ENCODE measurements at regions of chr1 and their contacts with region 1.

Region 1: GRCh38 chr1:203861379-203862184 is at the start of gene SNRPE:
- DNase-seq: peak; percentile 91 to 96
- H3K4me3 ChIP-seq: peak within 1 kb of the TSS; percentile 85
- H3K27ac ChIP-seq: peak within 1 kb of the TSS; percentile 66
- H3K4me1 ChIP-seq: peaks cover 21% of the 10 kb centered on the region
- H3K27me3 ChIP-seq: no peaks in the 10 kb centered on the region
- CTCF ChIP-seq: peak; percentile 95
- total RNA-seq, gene SNRPE: 201 and 218 TPM in 2 replicates

Region 2: DNA sequence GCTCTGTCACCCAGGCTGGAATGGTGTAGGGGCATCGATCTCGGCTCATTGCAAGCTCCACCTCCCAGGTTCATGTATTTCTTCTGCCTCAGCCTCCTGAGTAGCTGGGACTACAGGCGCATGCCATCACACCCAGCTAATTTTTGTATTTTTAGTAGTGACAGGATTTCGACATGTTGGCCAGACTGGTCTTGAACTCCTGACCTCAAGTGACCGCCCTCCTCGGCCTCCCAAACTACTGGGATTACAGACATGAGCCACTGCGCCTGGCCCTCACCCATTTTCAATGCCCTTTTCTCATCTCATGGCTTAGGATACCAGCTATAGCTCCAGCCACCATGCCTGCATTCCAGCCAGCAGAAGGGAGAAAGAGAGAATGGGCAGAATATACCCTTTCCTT is 198.4 kb after region 1 on chr1:
- CTCF ChIA-PET with region 1: no interaction called
- POLR2A ChIA-PET with region 1: interaction called, 12 read pairs
- intact Hi-C with region 1: no loop called
- DNase-seq: no peak
- H3K4me3 ChIP-seq: no peak overlapping the region
- H3K27ac ChIP-seq: no peak overlapping the region
- H3K4me1 ChIP-seq: peaks cover 54% of the 10 kb centered on the region
- H3K27me3 ChIP-seq: no peaks in the 10 kb centered on the region
- CTCF ChIP-seq: no peak

Region 3: GRCh38 chr1:204162231-204163074 is 300.9 kb after region 1 on chr1:
- CTCF ChIA-PET with region 1: interaction called, 7 read pairs
- POLR2A ChIA-PET with region 1: no interaction called
- intact Hi-C with region 1: loop called (anchors 1 kb)
- DNase-seq: peak; percentile 93 to 94
- H3K4me3 ChIP-seq: no peak overlapping the region
- H3K27ac ChIP-seq: 0 out of 2 replicates have a peak overlapping the region, but pooled peaks have one; percentile 28
- H3K4me1 ChIP-seq: peaks cover 21% of the 10 kb centered on the region
- H3K27me3 ChIP-seq: no peaks in the 10 kb centered on the region
- CTCF ChIP-seq: peak; percentile 99

Region 4: GRCh38 chr1:204213668-204214662 is 352.4 kb after region 1 on chr1 and contains the start of gene GOLT1A:
- CTCF ChIA-PET with region 1: interaction called, 4 read pairs
- POLR2A ChIA-PET with region 1: no interaction called
- intact Hi-C with region 1: loop called (anchors 5 kb)
- DNase-seq: peak; percentile 91 to 93
- H3K4me3 ChIP-seq: peak within 1 kb of the TSS; percentile 58
- H3K27ac ChIP-seq: no peak within 1 kb of the TSS
- H3K4me1 ChIP-seq: peaks cover 17% of the 10 kb centered on the region
- H3K27me3 ChIP-seq: no peaks in the 10 kb centered on the region
- CTCF ChIP-seq: peak; percentile 82
- total RNA-seq, gene GOLT1A: 18.7 and 22.8 TPM in 2 replicates

Measured in PC-9 (cell line).